Mammary epithelial cell (primary cell): ENCODE measurements at regions of chr5 and their contacts with region 1.

Region 1: GRCh38 chr5:33257807-33258483 is 182.8 kb upstream of the TARS1 start:
- DNase-seq: peak; percentile 74
- H3K4me3 ChIP-seq: no peak overlapping the region
- H3K27ac ChIP-seq: no peak overlapping the region
- H3K4me1 ChIP-seq: peaks cover 9% of the 10 kb centered on the region
- H3K27me3 ChIP-seq: no peaks in the 10 kb centered on the region
- CTCF ChIP-seq: peak; percentile 15 to 18

Region 2: GRCh38 chr5:32955814-32956213 is 302.1 kb before region 1 on chr5:
- CTCF ChIA-PET with region 1: no interaction called
- dilution Hi-C with region 1: no loop called
- in situ Hi-C with region 1: no loop called
- intact Hi-C with region 1: loop called (anchors 10 kb)
- DNase-seq: no peak
- H3K4me3 ChIP-seq: no peak overlapping the region
- H3K27ac ChIP-seq: no peak overlapping the region
- H3K4me1 ChIP-seq: peaks cover 10% of the 10 kb centered on the region
- H3K27me3 ChIP-seq: no peaks in the 10 kb centered on the region
- CTCF ChIP-seq: no peak

Region 3: GRCh38 chr5:33299621-33300208 is 41.8 kb after region 1 on chr5:
- CTCF ChIA-PET with region 1: no interaction called
- dilution Hi-C with region 1: no loop called
- in situ Hi-C with region 1: no loop called
- intact Hi-C with region 1: no loop called
- DNase-seq: peak; percentile 90
- H3K4me3 ChIP-seq: peak overlapping the region in 1 of 3 experiments; percentile 3
- H3K27ac ChIP-seq: peak overlapping the region; percentile 79
- H3K4me1 ChIP-seq: peaks cover 21% of the 10 kb centered on the region
- H3K27me3 ChIP-seq: no peaks in the 10 kb centered on the region
- CTCF ChIP-seq: peak; percentile 43 to 56

Region 4: GRCh38 chr5:33379757-33380156 is 121.8 kb after region 1 on chr5:
- CTCF ChIA-PET with region 1: no interaction called
- dilution Hi-C with region 1: no loop called
- in situ Hi-C with region 1: no loop called
- intact Hi-C with region 1: loop called (anchors 5 kb)
- DNase-seq: peak; percentile 20
- H3K4me3 ChIP-seq: no peak overlapping the region
- H3K27ac ChIP-seq: no peak overlapping the region
- H3K4me1 ChIP-seq: peaks cover 6% of the 10 kb centered on the region
- H3K27me3 ChIP-seq: no peaks in the 10 kb centered on the region
- CTCF ChIP-seq: peak; percentile 50 to 51

Region 5: GRCh38 chr5:33423018-33423630 is 165.2 kb after region 1 on chr5:
- CTCF ChIA-PET with region 1: no interaction called
- dilution Hi-C with region 1: no loop called
- in situ Hi-C with region 1: no loop called
- intact Hi-C with region 1: loop called (anchors 5 kb)
- DNase-seq: no peak
- H3K4me3 ChIP-seq: no peak overlapping the region
- H3K27ac ChIP-seq: no peak overlapping the region
- H3K4me1 ChIP-seq: no peaks in the 10 kb centered on the region
- H3K27me3 ChIP-seq: no peaks in the 10 kb centered on the region
- CTCF ChIP-seq: peak; percentile 27 to 51